ENCODE measurements at regions of chr13 and their contacts with region 1.

Region 1: GRCh38 chr13:110340812-110341444 is 33.8 kb downstream of the COL4A2 start:
- DNase-seq: peak; percentile 85 to 99
- H3K4me3 ChIP-seq: peak overlapping the region; percentile 17 to 51
- H3K27ac ChIP-seq: peak overlapping the region; percentile 95 to 96
- H3K4me1 ChIP-seq: peaks cover 43 to 68% of the 10 kb centered on the region in 2 donors
- H3K27me3 ChIP-seq: no peaks in the 10 kb centered on the region
- CTCF ChIP-seq: no peak

Region 2: DNA sequence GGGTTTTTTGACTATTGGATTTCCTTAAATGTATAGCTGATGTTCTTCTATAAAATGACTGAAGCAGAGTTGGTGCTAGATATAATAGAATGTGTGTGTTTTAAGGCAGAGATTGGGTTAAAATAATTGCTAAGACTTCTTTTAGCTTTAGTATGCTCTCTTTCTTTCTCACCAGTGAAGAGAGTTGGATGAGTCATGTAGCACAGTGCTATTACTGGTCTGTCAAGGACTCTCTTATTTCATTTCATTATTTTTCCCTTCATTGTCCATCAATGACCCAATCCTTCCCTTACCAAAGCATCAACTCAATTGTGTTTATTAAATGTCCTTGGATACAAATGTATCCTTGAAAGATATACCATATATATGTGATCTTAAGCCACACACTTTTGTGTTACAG is 823.4 kb before region 1 on chr13:
- intact Hi-C with region 1: no loop called
- DNase-seq: no peak
- H3K4me3 ChIP-seq: no peak overlapping the region
- H3K27ac ChIP-seq: no peak overlapping the region
- H3K4me1 ChIP-seq: no peaks in the 10 kb centered on the region
- H3K27me3 ChIP-seq: no peaks in the 10 kb centered on the region
- CTCF ChIP-seq: no peak

Region 3: GRCh38 chr13:110250258-110250891 is 90.6 kb before region 1 on chr13:
- intact Hi-C with region 1: loop called (anchors 1 kb)
- DNase-seq: peak in 1 of 2 donors; percentile 77
- H3K4me3 ChIP-seq: peak overlapping the region; percentile 2 to 3
- H3K27ac ChIP-seq: peak overlapping the region; percentile 89 to 91
- H3K4me1 ChIP-seq: peaks cover 14 to 70% of the 10 kb centered on the region in 2 donors
- H3K27me3 ChIP-seq: no peaks in the 10 kb centered on the region
- CTCF ChIP-seq: no peak

Region 4: DNA sequence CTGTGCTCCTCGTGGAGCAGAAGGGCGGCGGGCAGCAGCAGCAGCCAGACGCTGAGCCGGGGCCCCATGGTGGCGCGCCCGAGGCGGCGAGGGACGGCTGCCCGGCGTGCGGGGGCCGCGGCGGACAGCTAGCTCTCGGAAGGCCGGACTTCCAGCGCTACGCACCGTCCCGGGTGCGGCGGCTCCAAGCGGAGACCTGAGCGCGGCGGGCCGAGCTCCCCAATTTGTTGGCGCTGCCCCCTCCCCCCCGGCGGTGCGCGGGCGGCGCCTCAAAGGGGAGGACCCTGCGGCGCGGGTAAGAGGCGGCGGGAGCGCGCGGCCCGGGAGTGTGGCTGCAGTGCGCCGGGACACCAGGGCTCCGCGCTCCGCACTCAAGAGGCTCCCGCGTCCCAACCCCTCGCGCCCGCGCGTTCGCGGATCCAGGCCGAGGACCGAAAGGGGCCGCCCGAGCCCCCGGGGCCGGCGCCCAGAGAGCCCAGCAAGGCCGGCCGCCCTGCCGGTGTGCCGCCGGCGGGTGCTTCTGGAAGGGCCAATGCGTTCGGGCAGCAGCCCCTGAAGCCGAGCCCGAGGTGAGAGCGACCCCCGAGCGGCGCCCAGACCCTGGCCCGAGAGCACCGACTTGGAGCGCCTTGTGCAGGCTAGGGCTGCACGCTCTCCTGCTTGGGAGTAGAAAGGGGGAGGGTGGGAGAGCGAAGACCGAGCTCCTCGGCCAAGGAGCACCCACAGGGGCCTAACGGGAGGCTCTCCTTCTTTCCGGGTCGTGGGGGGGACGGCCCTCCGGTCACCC is 33.8 kb before region 1 on chr13 and contains the starts of genes COL4A1 and COL4A2:
- intact Hi-C with region 1: loop called (anchors 2 kb)
- DNase-seq: peak in 1 of 2 donors; percentile 88
- H3K4me3 ChIP-seq: peak within 1 kb of the TSS; percentile 84
- H3K27ac ChIP-seq: peak within 1 kb of the TSS; percentile 95 to 99
- H3K4me1 ChIP-seq: peaks cover 13 to 39% of the 10 kb centered on the region in 2 donors
- H3K27me3 ChIP-seq: no peaks in the 10 kb centered on the region
- CTCF ChIP-seq: no peak
- total RNA-seq, gene COL4A1: 756 TPM
- total RNA-seq, gene COL4A2: 1,227 TPM

Region 5: GRCh38 chr13:110329798-110330461 is 11.0 kb before region 1 on chr13:
- intact Hi-C with region 1: loop called (anchors 1 kb)
- DNase-seq: peak in 1 of 2 donors; percentile 70
- H3K4me3 ChIP-seq: peak overlapping the region; percentile 34 to 55
- H3K27ac ChIP-seq: peak overlapping the region; percentile 95 to 96
- H3K4me1 ChIP-seq: peaks cover 7 to 69% of the 10 kb centered on the region in 2 donors
- H3K27me3 ChIP-seq: no peaks in the 10 kb centered on the region
- CTCF ChIP-seq: no peak

Region 6: DNA sequence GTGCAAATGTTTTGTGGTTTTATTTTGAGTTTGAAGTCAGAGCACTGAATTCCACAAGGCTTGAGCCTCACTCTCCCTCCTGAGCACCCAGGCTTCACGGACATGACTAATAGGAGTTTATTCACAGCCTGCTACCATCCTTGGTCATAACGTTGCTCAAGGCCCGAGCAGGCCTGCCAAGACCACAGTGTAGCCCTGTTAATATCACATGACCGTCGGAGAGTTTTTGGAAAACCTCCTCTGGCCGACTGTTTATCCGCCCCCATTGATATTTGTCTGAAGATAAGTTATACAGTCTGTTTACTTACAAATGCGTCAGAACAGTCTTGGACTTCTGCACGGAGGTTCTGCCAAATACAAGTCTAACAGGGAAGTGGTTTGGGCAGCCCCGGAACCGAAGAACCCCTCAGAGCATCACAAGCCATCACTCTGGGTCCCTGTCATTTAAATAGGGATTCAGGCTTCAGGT is 56.0 kb after region 1 on chr13:
- intact Hi-C with region 1: loop called (anchors 1 kb)
- DNase-seq: peak; percentile 93 to 99
- H3K4me3 ChIP-seq: peak overlapping the region; percentile 37 to 41
- H3K27ac ChIP-seq: peak overlapping the region; percentile 98 to 99
- H3K4me1 ChIP-seq: peaks cover 26 to 78% of the 10 kb centered on the region in 2 donors
- H3K27me3 ChIP-seq: no peaks in the 10 kb centered on the region
- CTCF ChIP-seq: no peak

Region 7: GRCh38 chr13:110412132-110412914 is 71.4 kb after region 1 on chr13:
- intact Hi-C with region 1: loop called (anchors 2 kb)
- DNase-seq: peak; percentile 81 to 97
- H3K4me3 ChIP-seq: no peak overlapping the region
- H3K27ac ChIP-seq: peak overlapping the region; percentile 90 to 91
- H3K4me1 ChIP-seq: peaks cover 48 to 74% of the 10 kb centered on the region in 2 donors
- H3K27me3 ChIP-seq: no peaks in the 10 kb centered on the region
- CTCF ChIP-seq: peak; percentile 82 to 95 (median 92)

Region 8: GRCh38 chr13:110664041-110664440 is 323.1 kb after region 1 on chr13:
- intact Hi-C with region 1: no loop called
- DNase-seq: no peak
- H3K4me3 ChIP-seq: no peak overlapping the region
- H3K27ac ChIP-seq: no peak overlapping the region
- H3K4me1 ChIP-seq: no peaks in the 10 kb centered on the region
- H3K27me3 ChIP-seq: no peaks in the 10 kb centered on the region
- CTCF ChIP-seq: no peak

Measured in ascending aorta (tissue), 2 donors.